ENCODE measurements at regions of chr1 and their contacts with region 1.

Region 1: GRCh38 chr1:199243423-199244061 is 604.7 kb downstream of the PTPRC start:
- DNase-seq: peak; percentile 57 to 90
- H3K4me3 ChIP-seq: no peak overlapping the region
- H3K27ac ChIP-seq: no peak overlapping the region
- H3K4me1 ChIP-seq: no peaks in the 10 kb centered on the region
- H3K27me3 ChIP-seq: no peaks in the 10 kb centered on the region
- CTCF ChIP-seq: peak; percentile 79 to 92 (median 86)
- EP300 ChIP-seq: no peak
- POLR2A ChIP-seq: no peak
- RAD21 ChIP-seq: peak; percentile 92

Region 2: DNA sequence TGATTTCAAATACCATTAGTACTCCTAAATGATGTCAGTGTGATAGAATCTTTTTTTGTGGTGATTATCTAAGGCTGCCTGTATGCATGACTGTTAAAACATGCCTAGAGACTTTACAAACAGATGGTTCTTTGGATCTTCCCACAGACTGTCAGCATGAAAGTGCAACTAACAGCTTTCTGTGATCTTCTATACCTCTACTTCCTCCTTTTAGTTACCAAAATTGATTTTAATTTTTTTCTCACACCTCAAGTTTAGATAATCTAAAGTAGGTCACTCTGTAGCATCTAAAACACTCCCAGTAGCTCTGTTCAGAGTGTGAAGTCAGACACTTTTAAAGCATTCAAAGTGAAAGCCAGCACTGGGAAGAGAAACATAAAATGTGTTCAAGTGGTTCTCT is 70.2 kb before region 1 on chr1:
- CTCF ChIA-PET with region 1: no interaction called
- POLR2A ChIA-PET with region 1: no interaction called
- DNase-seq: no peak
- H3K4me3 ChIP-seq: no peak overlapping the region
- H3K27ac ChIP-seq: no peak overlapping the region
- H3K4me1 ChIP-seq: no peaks in the 10 kb centered on the region
- H3K27me3 ChIP-seq: no peaks in the 10 kb centered on the region
- CTCF ChIP-seq: no peak
- EP300 ChIP-seq: no peak
- POLR2A ChIP-seq: no peak
- RAD21 ChIP-seq: no peak

Region 3: DNA sequence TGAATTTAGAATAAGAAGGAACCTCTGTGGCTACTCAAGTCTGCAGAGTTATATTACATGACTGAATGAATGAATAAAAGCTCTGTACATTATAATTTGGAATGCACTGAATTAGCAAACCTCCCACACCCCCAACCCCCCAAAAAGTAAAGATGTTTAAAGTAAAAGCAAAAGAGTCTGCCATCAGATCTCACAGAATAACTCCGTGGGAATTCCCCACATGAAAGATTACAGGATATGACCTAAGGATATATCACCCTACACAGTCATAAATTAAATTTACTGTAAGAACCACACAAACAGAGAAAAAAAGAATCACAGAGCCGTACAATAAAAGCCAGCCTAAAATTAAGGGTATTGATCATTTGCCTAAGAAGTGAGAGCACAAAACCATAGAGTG is 17.4 kb before region 1 on chr1:
- CTCF ChIA-PET with region 1: interaction called, 15 read pairs
- POLR2A ChIA-PET with region 1: no interaction called
- DNase-seq: no peak
- H3K4me3 ChIP-seq: no peak overlapping the region
- H3K27ac ChIP-seq: no peak overlapping the region
- H3K4me1 ChIP-seq: no peaks in the 10 kb centered on the region
- H3K27me3 ChIP-seq: no peaks in the 10 kb centered on the region
- CTCF ChIP-seq: no peak
- EP300 ChIP-seq: no peak
- POLR2A ChIP-seq: no peak
- RAD21 ChIP-seq: no peak

Region 4: GRCh38 chr1:199260801-199261200 is 17.3 kb after region 1 on chr1:
- CTCF ChIA-PET with region 1: interaction called, 10 read pairs
- POLR2A ChIA-PET with region 1: no interaction called
- DNase-seq: no peak
- H3K4me3 ChIP-seq: no peak overlapping the region
- H3K27ac ChIP-seq: no peak overlapping the region
- H3K4me1 ChIP-seq: no peaks in the 10 kb centered on the region
- H3K27me3 ChIP-seq: no peaks in the 10 kb centered on the region
- CTCF ChIP-seq: no peak
- EP300 ChIP-seq: no peak
- POLR2A ChIP-seq: no peak
- RAD21 ChIP-seq: no peak